CD4-positive, alpha-beta T cell (primary cell): ENCODE measurements at regions of chr7 and their contacts with region 1.

Region 1: GRCh38 chr7:133522501-133522900 is 269.6 kb downstream of the EXOC4 start:
- DNase-seq: no peak
- ATAC-seq: no peak
- H3K4me3 ChIP-seq: no peak overlapping the region
- H3K4me3 Mint-ChIP-seq: no peak overlapping the region
- H3K27ac ChIP-seq: no peak overlapping the region
- H3K27ac Mint-ChIP-seq: no peak overlapping the region
- H3K4me1 ChIP-seq: no peaks in the 10 kb centered on the region
- H3K4me1 Mint-ChIP-seq: peaks cover 7% of the 10 kb centered on the region
- H3K27me3 ChIP-seq: no peaks in the 10 kb centered on the region
- H3K27me3 Mint-ChIP-seq: no peaks in the 10 kb centered on the region
- CTCF ChIP-seq: no peak

Region 2: DNA sequence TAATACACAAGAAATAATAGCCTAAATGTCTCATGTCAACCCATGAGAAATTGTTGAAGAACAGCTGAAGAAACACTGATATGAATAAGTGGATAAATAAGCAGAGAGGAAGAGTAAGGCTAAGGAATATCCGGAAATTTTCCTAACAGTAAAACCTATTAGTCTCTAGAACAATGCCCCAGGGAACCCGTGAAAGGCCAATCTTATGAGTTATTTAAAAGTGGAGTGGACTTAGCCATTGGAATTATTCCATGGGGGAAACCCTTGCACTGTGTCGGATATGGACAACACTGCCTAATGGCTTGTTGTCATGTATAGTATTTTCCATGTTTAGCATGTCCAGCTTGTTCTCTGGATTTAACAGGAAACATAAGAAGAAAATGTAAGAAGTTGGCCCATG is 729.0 kb before region 1 on chr7:
- CTCF ChIA-PET with region 1: no interaction called
- POLR2A ChIA-PET with region 1: no interaction called
- intact Hi-C with region 1: loop called in 1 of 2 experiments (anchors 5 kb)
- DNase-seq: no peak
- ATAC-seq: no peak
- H3K4me3 ChIP-seq: no peak overlapping the region
- H3K4me3 Mint-ChIP-seq: no peak overlapping the region
- H3K27ac ChIP-seq: no peak overlapping the region
- H3K27ac Mint-ChIP-seq: no peak overlapping the region
- H3K4me1 ChIP-seq: no peaks in the 10 kb centered on the region
- H3K4me1 Mint-ChIP-seq: no peaks in the 10 kb centered on the region
- H3K27me3 ChIP-seq: no peaks in the 10 kb centered on the region
- H3K27me3 Mint-ChIP-seq: no peaks in the 10 kb centered on the region
- CTCF ChIP-seq: no peak